Heart right ventricle (tissue), 16 donors: ENCODE measurements at regions of chr7 and their contacts with region 1.

Region 1: DNA sequence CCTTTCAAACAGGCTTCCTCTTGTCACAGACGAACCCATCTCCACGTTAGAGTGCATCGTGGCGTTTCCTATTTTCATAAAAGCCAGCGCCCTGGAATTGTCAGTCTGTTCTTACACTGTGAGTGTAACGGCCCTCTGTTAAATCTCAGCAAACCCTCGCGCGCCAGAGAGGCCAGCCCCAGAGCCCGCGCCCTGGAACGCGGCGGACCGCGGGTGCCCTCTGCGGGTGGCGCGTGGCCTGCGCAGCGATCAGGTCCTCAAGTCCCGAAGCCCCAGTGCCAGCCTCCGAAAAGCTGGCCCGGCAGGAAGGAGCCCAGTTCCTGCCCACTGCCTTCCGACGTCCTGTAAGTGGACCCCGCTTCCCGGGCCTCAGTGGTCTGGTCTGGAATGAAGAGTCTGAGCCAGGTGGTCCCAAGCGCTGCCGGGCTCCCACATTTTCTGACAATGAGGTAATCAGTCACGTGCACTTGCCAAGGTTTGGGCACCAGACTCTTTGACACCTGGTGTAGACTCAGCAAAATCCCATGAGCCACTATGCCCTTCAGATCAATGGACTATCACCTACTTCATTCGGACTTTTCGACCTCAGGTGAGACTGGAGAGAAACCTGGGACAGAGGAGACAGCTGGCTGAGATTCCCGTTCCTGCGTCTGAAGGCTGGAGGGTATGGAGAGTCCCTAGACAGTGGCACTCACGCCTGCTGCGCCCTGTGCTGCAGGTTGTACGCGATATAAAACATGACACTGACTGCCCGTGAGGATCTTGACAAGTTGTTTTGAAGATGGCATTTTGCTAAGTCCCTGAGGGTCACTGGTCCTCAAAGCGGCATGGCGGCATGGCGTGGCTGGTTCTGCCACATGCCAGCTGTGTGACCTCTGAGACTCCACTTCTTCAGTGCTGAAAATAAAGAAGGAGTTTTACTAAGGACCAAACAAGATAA is 109.4 kb upstream of the LANCL2 start:
- DNase-seq: peak; percentile 71 to 85
- ATAC-seq: peak; percentile 92 to 96 (median 94)
- H3K4me3 ChIP-seq: peak overlapping the region; percentile 46 to 84 (median 60)
- H3K27ac ChIP-seq: peak overlapping the region in 5 of 10 donors; percentile 8 to 65 (median 34)
- H3K4me1 ChIP-seq: peaks cover 0 to 19% (median 11%) of the 10 kb centered on the region in 9 donors
- H3K27me3 ChIP-seq: peaks cover 6 to 55% (median 30%) of the 10 kb centered on the region in 7 donors
- CTCF ChIP-seq: peak; percentile 81 to 97 (median 92)

Region 2: GRCh38 chr7:54788664-54789063 is 467.1 kb before region 1 on chr7:
- intact Hi-C with region 1: loop called (anchors 1 to 5 kb)
- DNase-seq: peak in 1 of 2 donors; percentile 36
- ATAC-seq: peak; percentile 67 to 93 (median 78)
- H3K4me3 ChIP-seq: no peak overlapping the region
- H3K27ac ChIP-seq: no peak overlapping the region
- H3K4me1 ChIP-seq: peaks cover 0 to 9% (median 6%) of the 10 kb centered on the region in 9 donors
- H3K27me3 ChIP-seq: peaks cover 0 to 7% (median 0%) of the 10 kb centered on the region in 7 donors
- CTCF ChIP-seq: peak; percentile 31 to 83 (median 67)

Region 3: DNA sequence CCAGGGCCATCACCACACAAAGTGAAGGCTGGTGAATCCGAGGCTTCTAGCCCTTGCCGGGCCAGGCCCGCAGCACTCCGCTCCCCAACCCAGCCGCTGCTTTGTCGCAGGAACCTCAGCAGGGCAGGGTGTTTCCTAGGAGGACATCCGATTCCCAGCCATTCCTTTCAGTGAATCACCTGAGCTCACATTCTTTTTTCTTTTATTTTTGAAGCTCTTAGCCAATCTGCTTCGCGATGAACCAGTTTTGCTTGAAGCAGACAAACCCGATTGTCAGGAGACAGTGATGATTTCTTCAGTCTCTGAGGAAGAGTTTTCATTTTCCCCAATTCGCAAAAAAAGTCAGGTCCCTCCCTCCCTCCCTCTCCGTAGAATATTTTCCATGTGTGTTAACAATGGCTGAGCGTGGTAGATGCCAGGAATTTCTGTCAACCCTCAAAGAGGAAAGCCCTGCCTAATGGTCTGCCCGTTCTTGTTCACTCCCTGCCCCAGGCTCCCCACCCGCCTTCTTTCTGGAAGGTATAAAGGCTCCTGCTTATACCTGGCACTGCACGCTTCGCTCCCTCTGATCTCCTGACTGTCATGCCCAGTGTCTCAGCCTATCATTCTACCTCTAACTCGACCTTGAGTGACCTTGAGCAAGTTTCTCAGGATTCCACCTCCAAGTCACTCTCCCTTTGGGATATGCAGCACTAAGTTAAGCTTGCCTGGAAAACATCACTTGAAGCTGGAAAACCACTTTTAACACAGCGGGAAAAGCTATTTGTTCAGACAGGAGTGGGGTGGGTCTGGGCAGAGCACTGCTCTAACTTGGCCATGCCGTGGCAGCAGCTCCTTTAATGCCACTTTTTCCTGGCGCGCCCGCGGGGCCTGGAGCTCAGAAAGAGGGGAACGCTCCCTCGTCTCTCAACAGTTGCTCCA is 201.9 kb before region 1 on chr7:
- intact Hi-C with region 1: loop called in 1 of 10 experiments (anchors 10 kb)
- DNase-seq: no peak
- ATAC-seq: peak in 6 of 8 donors; percentile 26 to 54 (median 42)
- H3K4me3 ChIP-seq: no peak overlapping the region
- H3K27ac ChIP-seq: peak overlapping the region in 7 of 10 donors; percentile 1 to 52 (median 47)
- H3K4me1 ChIP-seq: peaks cover 0 to 48% (median 28%) of the 10 kb centered on the region in 9 donors
- H3K27me3 ChIP-seq: no peaks in the 10 kb centered on the region
- CTCF ChIP-seq: peak in 3 of 9 donors; percentile 15 to 20 (median 18)

Region 4: GRCh38 chr7:55774326-55775064 is 518.7 kb after region 1 on chr7:
- intact Hi-C with region 1: no loop called
- DNase-seq: no peak
- ATAC-seq: no peak
- H3K4me3 ChIP-seq: no peak overlapping the region
- H3K27ac ChIP-seq: no peak overlapping the region
- H3K4me1 ChIP-seq: no peaks in the 10 kb centered on the region
- H3K27me3 ChIP-seq: no peaks in the 10 kb centered on the region
- CTCF ChIP-seq: no peak